ENCODE measurements at regions of chr9 and their contacts with region 1.

Region 1: GRCh38 chr9:72540348-72540873 is 19.0 kb downstream of the TMC1 start:
- DNase-seq: peak; percentile 87
- H3K4me3 Mint-ChIP-seq: peak overlapping the region; percentile 4
- H3K27ac Mint-ChIP-seq: peak overlapping the region; percentile 59
- H3K4me1 Mint-ChIP-seq: peaks cover 39% of the 10 kb centered on the region
- H3K27me3 Mint-ChIP-seq: no peaks in the 10 kb centered on the region
- CTCF ChIP-seq: no peak

Region 2: GRCh38 chr9:72473474-72474261 is 66.7 kb before region 1 on chr9:
- CTCF ChIA-PET with region 1: no interaction called
- POLR2A ChIA-PET with region 1: interaction called, 3 read pairs
- intact Hi-C with region 1: loop called (anchors 5 kb)
- DNase-seq: no peak
- H3K4me3 Mint-ChIP-seq: no peak overlapping the region
- H3K27ac Mint-ChIP-seq: no peak overlapping the region
- H3K4me1 Mint-ChIP-seq: peaks cover 20% of the 10 kb centered on the region
- H3K27me3 Mint-ChIP-seq: no peaks in the 10 kb centered on the region
- CTCF ChIP-seq: no peak

Region 3: DNA sequence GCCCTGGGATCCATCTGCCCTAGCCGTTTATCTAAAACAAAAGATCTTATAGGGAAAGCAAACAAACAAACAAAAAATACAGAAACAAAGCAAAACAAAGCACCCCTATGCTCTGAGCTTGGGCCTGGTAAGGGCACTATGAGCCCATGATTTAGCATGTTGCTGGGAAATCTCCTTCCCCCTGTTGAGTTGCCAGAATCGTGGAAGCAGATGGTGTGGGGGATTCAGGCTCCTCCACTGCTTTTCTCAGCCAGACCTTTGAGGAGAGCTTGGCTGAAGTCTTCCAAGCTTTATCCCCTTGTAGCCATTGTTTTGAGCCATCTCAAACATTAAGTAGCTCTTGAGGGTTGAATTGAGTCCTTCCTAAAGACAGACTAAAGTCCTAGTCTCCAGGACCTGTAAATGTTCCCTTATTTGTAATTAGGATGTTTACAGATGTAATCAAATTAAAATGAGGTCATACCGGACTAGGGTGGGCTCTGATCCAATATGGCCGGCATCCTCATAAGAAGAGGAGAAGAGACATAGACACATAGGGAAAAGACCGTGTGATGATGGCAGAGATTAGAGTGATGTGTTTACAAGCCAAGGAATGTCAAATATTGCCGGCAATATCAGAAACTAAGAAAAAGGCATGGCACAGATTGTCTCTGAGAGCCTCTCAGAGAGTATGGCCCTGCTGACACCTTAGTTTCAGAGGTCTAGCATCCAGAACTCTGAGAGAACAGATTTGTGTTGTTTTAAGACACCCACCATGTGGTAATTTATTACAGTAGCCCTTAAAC is 11.1 kb after region 1 on chr9:
- CTCF ChIA-PET with region 1: interaction called, 4 read pairs
- POLR2A ChIA-PET with region 1: interaction called, 16 read pairs
- intact Hi-C with region 1: no loop called
- DNase-seq: no peak
- H3K4me3 Mint-ChIP-seq: no peak overlapping the region
- H3K27ac Mint-ChIP-seq: peak overlapping the region; percentile 16
- H3K4me1 Mint-ChIP-seq: peaks cover 12% of the 10 kb centered on the region
- H3K27me3 Mint-ChIP-seq: no peaks in the 10 kb centered on the region
- CTCF ChIP-seq: no peak

Region 4: GRCh38 chr9:72557549-72557948 is 17.1 kb after region 1 on chr9:
- CTCF ChIA-PET with region 1: interaction called, 5 read pairs
- POLR2A ChIA-PET with region 1: interaction called, 16 read pairs
- intact Hi-C with region 1: no loop called
- DNase-seq: peak; percentile 93
- H3K4me3 Mint-ChIP-seq: no peak overlapping the region
- H3K27ac Mint-ChIP-seq: peak overlapping the region; percentile 91
- H3K4me1 Mint-ChIP-seq: peaks cover 24% of the 10 kb centered on the region
- H3K27me3 Mint-ChIP-seq: no peaks in the 10 kb centered on the region
- CTCF ChIP-seq: no peak

Region 5: DNA sequence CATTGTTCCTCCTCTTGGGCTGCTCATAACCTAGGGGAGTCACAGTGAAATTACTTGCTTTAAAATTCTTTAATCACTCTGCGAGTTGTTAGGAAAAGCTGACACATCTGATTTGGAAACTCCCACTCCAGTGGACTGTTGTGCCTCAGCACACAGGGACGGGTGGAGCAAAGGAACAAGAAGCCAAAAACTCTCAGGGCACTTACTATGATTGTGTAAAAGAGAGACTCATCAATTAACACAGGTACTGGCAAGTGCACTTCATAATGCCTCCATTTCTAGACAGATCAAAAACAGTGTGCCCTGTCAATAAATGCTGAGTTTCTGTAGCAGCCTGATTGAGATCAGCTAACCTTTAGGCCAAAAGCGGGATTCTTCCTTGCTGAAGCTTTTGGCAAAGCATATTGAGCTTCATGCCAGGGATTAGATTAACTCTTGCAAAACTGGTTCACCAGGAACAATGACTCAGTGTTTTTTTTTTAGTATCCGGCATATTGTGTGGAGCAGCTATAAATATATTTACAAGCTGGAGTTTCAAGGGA is 36.9 kb after region 1 on chr9:
- CTCF ChIA-PET with region 1: interaction called, 3 read pairs
- POLR2A ChIA-PET with region 1: interaction called, 46 read pairs
- intact Hi-C with region 1: no loop called
- DNase-seq: peak; percentile 95
- H3K4me3 Mint-ChIP-seq: peak overlapping the region; percentile 15
- H3K27ac Mint-ChIP-seq: peak overlapping the region; percentile 53
- H3K4me1 Mint-ChIP-seq: peaks cover 36% of the 10 kb centered on the region
- H3K27me3 Mint-ChIP-seq: no peaks in the 10 kb centered on the region
- CTCF ChIP-seq: no peak

Region 6: GRCh38 chr9:72586388-72587130 is 46.1 kb after region 1 on chr9:
- CTCF ChIA-PET with region 1: interaction called, 4 read pairs
- POLR2A ChIA-PET with region 1: interaction called, 46 read pairs
- intact Hi-C with region 1: loop called (anchors 5 kb)
- DNase-seq: peak; percentile 98
- H3K4me3 Mint-ChIP-seq: no peak overlapping the region
- H3K27ac Mint-ChIP-seq: peak overlapping the region; percentile 29
- H3K4me1 Mint-ChIP-seq: peaks cover 38% of the 10 kb centered on the region
- H3K27me3 Mint-ChIP-seq: no peaks in the 10 kb centered on the region
- CTCF ChIP-seq: no peak